PC-9 (cell line): ENCODE measurements at regions of chr1 and their contacts with region 1.

Region 1: GRCh38 chr1:85707990-85708828 is at the start of gene ZNHIT6:
- DNase-seq: peak; percentile 91 to 98
- H3K4me3 ChIP-seq: peak within 1 kb of the TSS; percentile 79
- H3K27ac ChIP-seq: peak within 1 kb of the TSS; percentile 67
- H3K4me1 ChIP-seq: peaks cover 22% of the 10 kb centered on the region
- H3K27me3 ChIP-seq: no peaks in the 10 kb centered on the region
- CTCF ChIP-seq: peak; percentile 73
- total RNA-seq, gene ZNHIT6: 13.7 and 16.1 TPM in 2 replicates

Region 2: GRCh38 chr1:85850238-85850637 is 142.0 kb after region 1 on chr1:
- CTCF ChIA-PET with region 1: interaction called, 6 read pairs
- POLR2A ChIA-PET with region 1: no interaction called
- intact Hi-C with region 1: loop called (anchors 5 kb)
- DNase-seq: peak; percentile 17 to 97
- H3K4me3 ChIP-seq: no peak overlapping the region
- H3K27ac ChIP-seq: peak overlapping the region; percentile 61
- H3K4me1 ChIP-seq: peaks cover 29% of the 10 kb centered on the region
- H3K27me3 ChIP-seq: no peaks in the 10 kb centered on the region
- CTCF ChIP-seq: peak; percentile 57

Region 3: DNA sequence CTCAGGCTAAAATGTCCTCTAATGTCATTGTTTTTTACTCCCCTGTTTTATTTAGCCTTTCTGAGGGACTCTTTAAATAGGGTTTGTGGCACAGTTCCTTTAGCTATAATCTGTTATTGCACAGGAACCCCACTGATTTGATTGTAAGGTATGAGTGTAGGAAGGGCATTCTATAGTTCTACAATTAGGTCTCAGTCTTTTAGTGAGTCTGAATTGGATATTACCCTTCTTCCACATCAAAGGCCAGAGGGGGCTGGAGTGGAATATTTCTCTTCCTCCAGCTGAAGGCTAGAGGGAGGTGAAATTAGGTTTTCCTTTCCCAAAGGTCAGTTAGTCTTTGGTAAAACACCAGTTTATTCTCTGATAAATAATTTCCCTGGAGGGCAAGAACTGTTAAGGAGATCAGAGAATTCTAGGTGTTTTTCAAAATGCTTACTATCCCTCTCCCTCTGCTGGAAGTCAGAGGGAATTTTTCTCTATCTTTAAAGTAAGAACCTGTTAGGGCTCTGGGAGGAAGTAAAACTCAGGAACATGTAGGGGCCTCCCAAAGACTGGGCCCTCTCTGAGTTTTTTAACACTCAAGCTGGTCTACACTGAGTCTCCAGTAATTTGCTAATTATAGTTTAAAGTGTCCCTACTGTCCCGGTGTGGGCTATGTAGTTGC is 176.3 kb after region 1 on chr1:
- CTCF ChIA-PET with region 1: no interaction called
- POLR2A ChIA-PET with region 1: no interaction called
- intact Hi-C with region 1: loop called (anchors 2 kb)
- DNase-seq: no peak
- H3K4me3 ChIP-seq: no peak overlapping the region
- H3K27ac ChIP-seq: no peak overlapping the region
- H3K4me1 ChIP-seq: no peaks in the 10 kb centered on the region
- H3K27me3 ChIP-seq: no peaks in the 10 kb centered on the region
- CTCF ChIP-seq: peak; percentile 83

Region 4: DNA sequence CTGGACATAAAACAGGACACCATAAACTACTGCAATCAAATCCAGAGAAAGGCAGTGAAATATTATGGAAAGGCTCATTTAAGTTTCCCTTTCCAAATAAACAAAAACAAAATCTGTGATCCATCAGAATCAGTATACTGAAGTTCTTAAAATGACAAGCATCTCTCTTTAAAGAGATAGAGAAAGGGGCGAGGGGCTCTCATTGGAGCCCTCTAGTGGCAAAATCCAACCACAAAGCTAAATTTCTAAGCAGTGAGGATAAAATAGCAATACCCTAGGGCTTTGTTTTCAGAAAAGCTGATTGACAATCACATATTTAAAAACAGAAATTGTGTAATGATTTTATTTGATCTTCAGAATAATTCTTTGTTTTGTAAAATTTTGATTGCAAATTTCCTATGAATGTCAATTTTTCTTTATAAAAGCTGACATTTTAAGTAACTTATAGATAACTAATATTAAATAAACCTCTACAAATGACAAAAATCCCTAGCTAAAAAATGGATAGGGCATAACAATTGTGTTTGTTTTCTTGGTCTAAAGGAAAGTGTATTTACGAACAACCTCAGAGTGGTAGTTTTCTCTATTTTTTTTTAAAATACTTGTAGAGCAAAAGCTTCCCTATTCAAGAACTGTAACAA is 310.2 kb after region 1 on chr1:
- CTCF ChIA-PET with region 1: no interaction called
- POLR2A ChIA-PET with region 1: no interaction called
- intact Hi-C with region 1: loop called (anchors 5 kb)
- DNase-seq: peak in 1 of 2 experiments; percentile 3
- H3K4me3 ChIP-seq: no peak overlapping the region
- H3K27ac ChIP-seq: no peak overlapping the region
- H3K4me1 ChIP-seq: no peaks in the 10 kb centered on the region
- H3K27me3 ChIP-seq: no peaks in the 10 kb centered on the region
- CTCF ChIP-seq: peak; percentile 85